Cardiac septum (tissue), 1 donor: ENCODE measurements at regions of chr3 and their contacts with region 1.

Region 1: DNA sequence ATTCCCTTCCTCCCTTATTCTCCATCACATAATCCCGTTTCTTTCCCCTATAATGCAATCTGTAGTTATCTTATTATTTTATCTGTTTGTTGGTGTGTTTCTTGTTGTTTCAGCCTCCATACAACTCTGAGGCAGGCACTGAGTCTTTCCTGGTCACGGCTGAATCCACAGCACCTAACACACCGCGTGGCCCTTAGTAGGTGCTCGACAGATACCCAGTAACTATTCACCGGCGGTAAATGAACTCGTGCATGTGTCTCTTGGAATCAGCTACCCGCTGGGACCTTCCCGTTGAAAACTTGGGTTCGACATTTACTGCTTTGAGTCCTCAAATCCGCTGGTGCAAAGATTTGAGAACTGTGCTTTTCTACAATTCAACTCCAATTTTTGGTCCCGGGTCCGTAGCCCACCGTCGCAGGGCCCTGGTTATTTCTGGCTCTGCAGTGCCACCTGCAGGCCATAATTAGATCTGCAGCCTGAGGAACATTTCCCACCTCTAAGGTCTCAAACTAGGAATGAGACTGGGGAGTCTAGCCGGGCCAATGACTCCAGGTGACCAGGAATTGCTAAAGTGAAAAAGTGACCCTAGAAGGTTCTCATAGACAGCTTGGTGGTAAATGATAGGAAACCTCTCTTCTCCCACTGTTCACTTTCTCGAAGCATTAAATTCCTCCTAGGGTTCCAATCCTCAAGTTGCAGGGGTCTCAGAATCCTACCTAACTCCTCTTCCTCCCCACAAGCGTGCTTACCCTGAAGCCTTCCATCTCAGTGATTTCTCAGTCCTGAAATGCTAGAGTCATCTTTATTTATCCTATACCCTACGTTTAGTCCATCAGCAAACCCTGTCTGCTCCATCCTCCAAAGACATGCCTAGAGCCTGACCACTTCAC is 40.0 kb upstream of the TRH start:
- DNase-seq: no peak

Region 2: DNA sequence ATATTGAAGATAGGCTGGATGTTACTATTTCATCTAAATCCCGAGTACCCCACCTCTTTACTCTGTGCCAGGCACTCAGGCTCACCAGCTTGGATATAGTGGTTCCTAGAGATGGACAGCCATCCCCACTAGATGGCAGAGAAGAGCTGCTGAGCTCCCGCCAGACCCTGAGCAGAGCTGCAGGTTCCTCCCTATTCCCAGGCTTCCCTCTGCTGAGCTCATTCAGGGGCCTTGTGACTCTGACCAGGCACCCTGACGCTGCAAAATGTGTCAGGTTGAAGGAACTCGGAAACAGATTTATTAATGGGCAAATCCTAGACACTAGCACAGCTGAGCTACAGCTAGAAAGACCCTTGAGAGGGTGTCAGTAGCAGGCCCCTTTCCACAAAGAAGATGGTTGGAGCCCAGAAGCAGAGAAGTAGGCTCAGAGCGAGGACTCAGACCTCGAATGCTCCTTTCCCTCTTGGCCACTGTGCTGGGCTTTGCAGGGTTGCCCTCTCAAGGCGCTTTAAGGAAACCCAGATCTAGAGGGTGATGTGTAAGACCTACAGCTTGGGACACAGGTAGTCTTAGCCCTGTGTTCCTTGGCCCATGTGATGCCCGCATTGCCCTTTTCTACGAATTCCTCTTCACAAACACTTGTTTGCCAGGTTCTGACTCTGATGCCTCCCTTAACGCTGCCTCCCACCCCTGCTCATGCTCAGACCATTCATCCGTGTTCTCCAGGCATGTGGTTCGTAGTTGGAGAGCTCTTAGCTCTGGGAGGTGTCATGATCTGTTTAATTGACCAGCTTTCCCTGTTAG is 444.0 kb before region 1 on chr3:
- intact Hi-C with region 1: loop called (anchors 5 kb)
- DNase-seq: peak; percentile 92

Region 3: DNA sequence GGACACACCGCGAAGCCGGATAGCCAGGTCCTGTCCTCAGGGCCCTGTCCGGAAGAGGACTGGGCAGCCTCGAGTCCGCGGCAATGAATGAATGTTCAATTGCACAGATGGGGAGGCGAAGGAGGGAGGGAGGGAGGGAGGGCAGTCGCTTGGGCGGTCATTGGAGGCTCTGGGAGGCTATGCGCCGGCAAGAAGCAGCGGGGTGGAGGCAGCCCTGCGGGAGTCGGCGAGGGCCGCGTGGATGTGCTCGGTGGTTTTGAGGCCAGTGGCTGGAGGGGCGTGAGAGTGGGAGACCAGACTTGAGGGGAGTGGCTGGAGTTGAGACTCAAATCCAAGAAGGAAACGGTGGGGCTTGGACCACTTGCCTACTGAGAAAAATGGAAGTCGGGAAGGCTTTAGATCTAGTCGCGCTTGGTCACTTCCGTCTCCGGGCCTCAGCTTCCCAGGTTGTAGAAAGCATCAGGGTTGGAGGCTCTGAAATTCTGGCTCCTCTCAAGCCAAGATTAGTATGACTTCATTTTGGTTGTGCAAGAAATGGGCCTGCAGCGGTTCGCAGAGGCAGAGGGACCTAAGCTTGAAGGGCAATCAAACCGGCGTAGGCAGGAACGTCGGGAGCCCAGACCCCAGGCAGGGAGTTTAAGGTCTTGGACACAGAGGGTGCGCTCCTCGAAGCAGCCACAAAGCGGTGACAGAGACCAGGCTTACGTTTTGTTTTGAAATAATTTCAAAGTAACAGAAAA is 306.9 kb before region 1 on chr3:
- intact Hi-C with region 1: loop called (anchors 2 kb)
- DNase-seq: no peak

Region 4: DNA sequence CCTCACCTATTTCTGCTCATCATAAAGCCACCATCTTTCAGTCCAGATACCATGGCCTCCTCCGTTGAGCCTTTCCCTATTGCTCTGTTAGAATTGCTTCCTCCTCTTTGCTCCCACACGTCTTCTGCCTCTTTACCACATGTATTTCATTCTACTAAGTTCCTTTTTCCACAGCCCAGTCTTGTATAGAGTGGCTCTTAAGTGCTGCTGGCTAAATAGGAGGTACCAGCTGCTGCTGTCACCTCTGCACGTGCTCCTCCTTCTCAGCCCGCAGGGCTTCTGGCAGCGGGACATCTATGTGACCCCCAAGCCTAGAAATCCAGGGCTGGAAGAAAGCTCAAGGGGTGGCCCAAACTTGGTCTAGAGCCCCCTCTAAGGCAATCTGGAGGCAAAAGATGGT is 289.2 kb before region 1 on chr3:
- intact Hi-C with region 1: loop called (anchors 5 kb)
- DNase-seq: no peak

Region 5: DNA sequence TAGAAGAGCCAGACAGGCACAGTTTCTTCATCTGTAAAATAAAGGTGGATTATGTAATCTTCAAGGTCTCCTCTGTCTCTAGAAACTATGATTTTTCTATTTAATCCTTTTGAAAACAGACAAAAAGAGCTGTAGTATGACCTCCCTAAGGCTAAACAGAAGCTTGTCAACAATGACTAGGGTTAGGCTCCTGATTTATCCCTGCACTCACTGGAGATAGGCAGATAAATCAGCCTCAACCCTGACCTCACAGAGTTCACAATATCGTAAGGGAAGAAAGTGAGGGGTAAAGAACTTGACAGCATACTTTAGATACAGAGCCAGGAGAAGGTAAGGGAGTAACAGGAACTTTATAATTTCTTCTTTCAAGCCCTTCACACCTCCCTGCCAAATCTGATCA is 165.8 kb before region 1 on chr3:
- intact Hi-C with region 1: no loop called
- DNase-seq: no peak

Region 6: GRCh38 chr3:130014526-130014925 is 80.0 kb after region 1 on chr3:
- intact Hi-C with region 1: no loop called
- DNase-seq: no peak